ENCODE measurements at regions of chr21 and their contacts with region 1.

Region 1: DNA sequence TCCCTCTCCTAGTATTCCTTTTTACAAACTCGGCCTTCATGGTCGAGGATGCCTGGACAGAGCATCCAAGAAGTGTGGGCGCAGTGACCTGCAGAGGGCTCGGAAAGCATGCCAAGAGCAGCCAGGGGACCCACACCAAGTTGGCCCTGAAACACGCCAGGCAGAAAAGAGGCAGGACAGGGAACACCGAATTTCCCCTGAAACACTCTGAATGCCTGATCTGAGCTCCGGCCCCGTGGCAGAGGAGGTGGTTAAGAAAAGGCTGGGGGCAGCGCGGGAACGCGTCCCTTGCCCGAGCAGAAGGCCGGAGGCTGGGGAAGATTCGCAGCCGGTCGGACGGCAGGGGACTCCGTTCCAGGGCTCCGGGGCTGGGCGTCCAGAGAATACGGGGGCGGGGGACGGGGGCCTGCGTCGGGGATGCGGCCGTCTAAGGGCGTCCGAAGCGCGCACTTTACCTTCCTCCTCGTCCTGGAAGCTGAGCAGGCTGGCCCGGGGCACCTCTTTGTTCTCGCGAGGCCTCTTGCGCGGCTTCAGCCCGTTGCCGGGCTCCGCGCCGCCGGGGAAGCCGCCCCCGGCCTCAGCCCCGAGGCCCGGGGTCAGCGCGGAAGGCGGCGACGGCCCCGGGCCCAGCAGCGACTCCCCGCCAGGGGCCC is 558 bp downstream of the PAXBP1 start:
- DNase-seq: no peak
- ATAC-seq: peak; percentile 40
- H3K4me3 ChIP-seq: peak overlapping the region; percentile 65 to 84 (median 78)
- H3K4me3 Mint-ChIP-seq: peak overlapping the region; percentile 96
- H3K27ac ChIP-seq: peak overlapping the region; percentile 48 to 77
- H3K27ac Mint-ChIP-seq: peak overlapping the region; percentile 93
- H3K4me1 ChIP-seq: peaks cover 12 to 19% of the 10 kb centered on the region in 2 donors
- H3K4me1 Mint-ChIP-seq: peaks cover 50% of the 10 kb centered on the region
- H3K27me3 ChIP-seq: no peaks in the 10 kb centered on the region
- H3K27me3 Mint-ChIP-seq: no peaks in the 10 kb centered on the region
- CTCF ChIP-seq: no peak

Region 2: DNA sequence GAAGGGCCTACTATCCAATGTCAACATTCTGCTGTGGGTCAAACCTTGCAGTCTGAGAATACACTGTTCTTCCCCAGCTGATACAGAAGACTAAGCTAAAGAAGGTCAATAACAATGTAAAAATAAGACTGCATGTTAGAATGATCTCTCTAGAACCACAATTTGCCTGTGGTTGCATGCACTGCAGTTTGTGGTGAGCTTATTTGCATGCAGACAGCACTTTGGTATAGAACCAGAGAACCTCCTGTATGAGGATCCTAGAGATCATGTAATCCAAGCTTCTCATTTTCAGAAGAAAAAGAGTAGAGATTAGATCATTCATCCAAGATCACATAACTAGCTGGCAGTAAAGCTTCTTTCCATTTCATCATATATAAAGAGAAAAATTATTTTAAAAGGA is 59.0 kb before region 1 on chr21:
- CTCF ChIA-PET with region 1: interaction called, 6 read pairs
- POLR2A ChIA-PET with region 1: interaction called, 6 read pairs
- intact Hi-C with region 1: loop called (anchors 1 kb)
- DNase-seq: peak; percentile 88
- ATAC-seq: peak; percentile 96
- H3K4me3 ChIP-seq: peak overlapping the region in 1 of 5 experiments; percentile 0
- H3K4me3 Mint-ChIP-seq: peak overlapping the region; percentile 67
- H3K27ac ChIP-seq: no peak overlapping the region
- H3K27ac Mint-ChIP-seq: peak overlapping the region; percentile 61
- H3K4me1 ChIP-seq: peaks cover 22 to 30% of the 10 kb centered on the region in 2 donors
- H3K4me1 Mint-ChIP-seq: peaks cover 20% of the 10 kb centered on the region
- H3K27me3 ChIP-seq: peaks cover 2 to 60% (median 59%) of the 10 kb centered on the region in 4 experiments
- H3K27me3 Mint-ChIP-seq: peaks cover 52% of the 10 kb centered on the region
- CTCF ChIP-seq: no peak

Region 3: GRCh38 chr21:33491373-33492102 is 720.5 kb after region 1 on chr21 and contains the start of gene DNAJC28:
- CTCF ChIA-PET with region 1: no interaction called
- POLR2A ChIA-PET with region 1: no interaction called
- intact Hi-C with region 1: loop called (anchors 1 kb)
- DNase-seq: peak; percentile 98
- ATAC-seq: peak; percentile 97
- H3K4me3 ChIP-seq: peak within 1 kb of the TSS; percentile 65 to 87 (median 80)
- H3K4me3 Mint-ChIP-seq: peak within 1 kb of the TSS; percentile 87
- H3K27ac ChIP-seq: peak within 1 kb of the TSS; percentile 29 to 62
- H3K27ac Mint-ChIP-seq: peak within 1 kb of the TSS; percentile 87
- H3K4me1 ChIP-seq: peaks cover 0 to 9% of the 10 kb centered on the region in 2 donors
- H3K4me1 Mint-ChIP-seq: peaks cover 10% of the 10 kb centered on the region
- H3K27me3 ChIP-seq: no peaks in the 10 kb centered on the region
- H3K27me3 Mint-ChIP-seq: no peaks in the 10 kb centered on the region
- CTCF ChIP-seq: no peak
- total RNA-seq, gene DNAJC28: 2.4 and 2.5 TPM in 2 replicates

Measured in B cell (primary cell).